IMR-90 (cell line): ENCODE measurements at regions of chr3 and their contacts with region 1.

Region 1: GRCh38 chr3:102174312-102174712 is 260.5 kb upstream of the ZPLD1 start:
- DNase-seq: peak; percentile 83
- ATAC-seq: peak; percentile 56
- H3K4me3 ChIP-seq: no peak overlapping the region
- H3K27ac ChIP-seq: peak overlapping the region; percentile 80; the same call in 1 of the 2 replicates
- H3K4me1 ChIP-seq: peaks cover 12% of the 10 kb centered on the region
- H3K27me3 ChIP-seq: no peaks in the 10 kb centered on the region
- CTCF ChIP-seq: no peak
- POLR2A ChIP-seq: no peak; the same call in 1 of the 2 replicates
- RAD21 ChIP-seq: no peak

Region 2: GRCh38 chr3:102002056-102002455 is 172.3 kb before region 1 on chr3:
- CTCF ChIA-PET with region 1: no interaction called
- POLR2A ChIA-PET with region 1: interaction called, 13 read pairs
- dilution Hi-C with region 1: no loop called
- in situ Hi-C with region 1: no loop called
- intact Hi-C with region 1: no loop called
- DNase-seq: no peak
- ATAC-seq: no peak
- H3K4me3 ChIP-seq: no peak overlapping the region
- H3K27ac ChIP-seq: no peak overlapping the region
- H3K4me1 ChIP-seq: peaks cover 4% of the 10 kb centered on the region; the same call in 1 of the 2 replicates
- H3K27me3 ChIP-seq: no peaks in the 10 kb centered on the region
- CTCF ChIP-seq: no peak
- POLR2A ChIP-seq: no peak
- RAD21 ChIP-seq: no peak

Region 3: DNA sequence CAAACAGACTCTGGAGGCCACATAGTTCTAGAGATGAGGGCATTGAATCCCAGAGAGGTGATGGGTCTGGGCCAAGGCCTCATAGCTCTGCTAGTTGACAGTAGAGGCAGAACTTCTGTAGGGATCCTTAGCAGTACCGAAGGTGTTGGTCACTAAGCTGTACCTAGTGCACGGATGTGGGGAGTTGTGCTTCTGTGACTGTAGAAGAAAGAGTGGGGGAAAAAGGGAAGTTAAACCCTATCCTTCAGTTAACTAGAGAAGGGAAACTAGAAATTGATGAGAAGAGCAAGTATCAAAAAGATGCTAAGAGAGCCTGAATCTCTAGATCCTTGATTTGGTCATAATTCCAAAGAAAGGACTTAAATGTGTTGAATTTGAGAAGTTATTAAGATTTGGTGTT is 138.3 kb before region 1 on chr3:
- CTCF ChIA-PET with region 1: no interaction called
- POLR2A ChIA-PET with region 1: no interaction called
- dilution Hi-C with region 1: no loop called
- in situ Hi-C with region 1: no loop called
- intact Hi-C with region 1: no loop called
- DNase-seq: no peak
- ATAC-seq: no peak
- H3K4me3 ChIP-seq: no peak overlapping the region
- H3K27ac ChIP-seq: no peak overlapping the region
- H3K4me1 ChIP-seq: peaks cover 2% of the 10 kb centered on the region; the same call in 1 of the 2 replicates
- H3K27me3 ChIP-seq: no peaks in the 10 kb centered on the region
- CTCF ChIP-seq: no peak
- POLR2A ChIP-seq: no peak
- RAD21 ChIP-seq: no peak

Region 4: GRCh38 chr3:102136183-102136582 is 38.1 kb before region 1 on chr3:
- CTCF ChIA-PET with region 1: no interaction called
- POLR2A ChIA-PET with region 1: no interaction called
- dilution Hi-C with region 1: loop called (anchors 5 kb)
- in situ Hi-C with region 1: no loop called
- intact Hi-C with region 1: no loop called
- DNase-seq: no peak
- ATAC-seq: no peak
- H3K4me3 ChIP-seq: no peak overlapping the region
- H3K27ac ChIP-seq: no peak overlapping the region
- H3K4me1 ChIP-seq: peaks cover 3% of the 10 kb centered on the region; the same call in 1 of the 2 replicates
- H3K27me3 ChIP-seq: no peaks in the 10 kb centered on the region
- CTCF ChIP-seq: no peak
- POLR2A ChIP-seq: no peak
- RAD21 ChIP-seq: no peak